CD14-positive monocyte (primary cell): ENCODE measurements at regions of chr16 and their contacts with region 1.

Region 1: GRCh38 chr16:2009789-2010510 is at the start of gene ZNF598:
- DNase-seq: peak; percentile 81 to 86 (median 85)
- H3K4me3 ChIP-seq: peak within 1 kb of the TSS; percentile 59 to 85 (median 63)
- H3K4me3 Mint-ChIP-seq: peak within 1 kb of the TSS; percentile 84 to 92
- H3K27ac ChIP-seq: peak within 1 kb of the TSS; percentile 80 to 88
- H3K27ac Mint-ChIP-seq: peak within 1 kb of the TSS; percentile 95 to 98 (median 97)
- H3K4me1 ChIP-seq: peaks cover 34 to 56% of the 10 kb centered on the region in 2 donors
- H3K4me1 Mint-ChIP-seq: peaks cover 43% of the 10 kb centered on the region
- H3K27me3 ChIP-seq: no peaks in the 10 kb centered on the region
- H3K27me3 Mint-ChIP-seq: peaks cover 0 to 1% (median 0%) of the 10 kb centered on the region in 3 donors
- CTCF ChIP-seq: no peak
- polyA plus RNA-seq, gene ZNF598: 1.4 to 42.1 (median 1.5) TPM

Region 2: GRCh38 chr16:2047330-2048115 is 37.6 kb after region 1 on chr16 and contains the starts of genes NTHL1 and TSC2:
- intact Hi-C with region 1: loop called in 1 of 2 experiments (anchors 5 kb)
- DNase-seq: peak; percentile 91 to 93 (median 93)
- H3K4me3 ChIP-seq: peak within 1 kb of the TSS; percentile 66 to 96 (median 82)
- H3K4me3 Mint-ChIP-seq: peak within 1 kb of the TSS; percentile 90 to 93
- H3K27ac ChIP-seq: peak within 1 kb of the TSS in 1 of 2 donors; percentile 77
- H3K27ac Mint-ChIP-seq: peak within 1 kb of the TSS; percentile 38 to 92 (median 82)
- H3K4me1 ChIP-seq: peaks cover 26 to 37% of the 10 kb centered on the region in 2 donors
- H3K4me1 Mint-ChIP-seq: peaks cover 27% of the 10 kb centered on the region
- H3K27me3 ChIP-seq: no peaks in the 10 kb centered on the region
- H3K27me3 Mint-ChIP-seq: peaks cover 0 to 2% (median 0%) of the 10 kb centered on the region in 3 donors
- CTCF ChIP-seq: peak; percentile 56
- polyA plus RNA-seq, gene NTHL1: 9.2 to 22.4 (median 9.6) TPM
- polyA plus RNA-seq, gene TSC2: 11.7 to 95.1 (median 20.8) TPM

Region 3: GRCh38 chr16:2147981-2148671 is 138.2 kb after region 1 on chr16 and contains the start of gene RAB26:
- intact Hi-C with region 1: loop called (anchors 5 kb)
- DNase-seq: no peak
- H3K4me3 ChIP-seq: peak within 1 kb of the TSS in 2 of 3 experiments; percentile 20 to 64
- H3K4me3 Mint-ChIP-seq: peak within 1 kb of the TSS; percentile 43 to 70
- H3K27ac ChIP-seq: no peak within 1 kb of the TSS
- H3K27ac Mint-ChIP-seq: no peak within 1 kb of the TSS
- H3K4me1 ChIP-seq: peaks cover 21 to 32% of the 10 kb centered on the region in 2 donors
- H3K4me1 Mint-ChIP-seq: peaks cover 30% of the 10 kb centered on the region
- H3K27me3 ChIP-seq: peaks cover 0 to 24% of the 10 kb centered on the region in 2 donors
- H3K27me3 Mint-ChIP-seq: peaks cover 15 to 38% (median 19%) of the 10 kb centered on the region in 3 donors
- CTCF ChIP-seq: no peak
- polyA plus RNA-seq, gene RAB26: not detected

Region 4: GRCh38 chr16:2244245-2244691 is 234.3 kb after region 1 on chr16:
- intact Hi-C with region 1: loop called in 1 of 2 experiments (anchors 10 kb)
- DNase-seq: no peak
- H3K4me3 ChIP-seq: no peak overlapping the region
- H3K4me3 Mint-ChIP-seq: no peak overlapping the region
- H3K27ac ChIP-seq: no peak overlapping the region
- H3K27ac Mint-ChIP-seq: no peak overlapping the region
- H3K4me1 ChIP-seq: no peaks in the 10 kb centered on the region
- H3K4me1 Mint-ChIP-seq: peaks cover 3% of the 10 kb centered on the region
- H3K27me3 ChIP-seq: no peaks in the 10 kb centered on the region
- H3K27me3 Mint-ChIP-seq: peaks cover 2 to 4% (median 3%) of the 10 kb centered on the region in 3 donors
- CTCF ChIP-seq: no peak

Region 5: DNA sequence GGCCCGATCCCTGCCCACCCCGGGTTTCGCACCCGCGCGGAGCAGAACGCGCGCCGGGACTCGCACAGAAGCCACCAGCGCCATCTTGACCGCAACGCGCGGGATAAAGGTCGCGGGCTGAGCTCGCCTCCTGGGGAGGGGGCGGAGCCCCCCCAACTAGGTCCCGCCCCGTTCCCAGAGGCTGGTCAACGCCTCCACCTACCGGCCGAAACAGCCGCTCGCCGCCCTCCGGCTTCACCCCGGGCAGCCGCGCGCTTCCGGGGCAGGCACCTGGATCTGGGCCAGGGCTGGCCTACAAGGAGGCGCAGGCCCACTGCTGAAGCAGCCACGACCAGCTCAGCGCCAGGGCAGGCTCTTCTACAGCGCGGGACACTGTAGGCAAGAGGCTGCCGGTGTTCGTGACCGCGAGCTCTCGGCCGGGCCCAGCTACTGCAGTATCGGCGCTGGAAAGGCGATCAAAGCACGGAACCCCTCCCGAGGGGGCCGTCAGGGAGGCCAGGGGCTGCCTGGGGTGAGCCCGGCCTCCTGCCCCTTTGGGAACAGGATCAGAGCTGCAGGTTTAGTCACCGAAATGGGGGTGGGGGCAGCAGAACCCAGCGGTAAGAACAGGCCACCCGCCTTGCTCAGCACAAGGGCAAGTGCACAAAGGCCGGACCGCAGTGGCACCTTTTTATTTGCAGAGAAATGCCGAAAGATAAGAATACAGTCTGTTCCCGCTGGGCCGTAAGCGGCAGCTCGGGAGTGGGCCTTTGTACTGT is 241.7 kb after region 1 on chr16 and contains the start of gene ECI1:
- intact Hi-C with region 1: loop called (anchors 10 kb)
- DNase-seq: peak; percentile 91 to 93 (median 92)
- H3K4me3 ChIP-seq: peak within 1 kb of the TSS; percentile 62 to 85 (median 68)
- H3K4me3 Mint-ChIP-seq: peak within 1 kb of the TSS; percentile 87 to 92
- H3K27ac ChIP-seq: peak within 1 kb of the TSS; percentile 71 to 75
- H3K27ac Mint-ChIP-seq: peak within 1 kb of the TSS; percentile 78 to 92 (median 86)
- H3K4me1 ChIP-seq: peaks cover 19 to 20% of the 10 kb centered on the region in 2 donors
- H3K4me1 Mint-ChIP-seq: peaks cover 15% of the 10 kb centered on the region
- H3K27me3 ChIP-seq: no peaks in the 10 kb centered on the region
- H3K27me3 Mint-ChIP-seq: peaks cover 0 to 1% (median 0%) of the 10 kb centered on the region in 3 donors
- CTCF ChIP-seq: peak; percentile 67
- polyA plus RNA-seq, gene ECI1: 29.9 to 74.5 (median 52.3) TPM